H1 (cell line): ENCODE measurements at regions of chr2 and their contacts with region 1.

Region 1: GRCh38 chr2:217650716-217651360 is 352.0 kb downstream of the TNS1 start:
- DNase-seq: peak; percentile 51 to 54
- H3K4me3 ChIP-seq: peak overlapping the region in 1 of 4 experiments; percentile 35; a peak in 2 of 8 replicates
- H3K27ac ChIP-seq: no peak overlapping the region
- H3K4me1 ChIP-seq: peaks cover 0 to 5% (median under 1%) of the 10 kb centered on the region in 4 experiments; a peak in 2 of 7 replicates
- H3K27me3 ChIP-seq: peaks cover 0 to 2% (median 0%) of the 10 kb centered on the region in 4 experiments; a peak in 1 of 7 replicates
- CTCF ChIP-seq: peak; percentile 47 to 94 (median 77)
- EP300 ChIP-seq: no peak
- POLR2A ChIP-seq: no peak
- RAD21 ChIP-seq: peak; percentile 73 to 79

Region 2: DNA sequence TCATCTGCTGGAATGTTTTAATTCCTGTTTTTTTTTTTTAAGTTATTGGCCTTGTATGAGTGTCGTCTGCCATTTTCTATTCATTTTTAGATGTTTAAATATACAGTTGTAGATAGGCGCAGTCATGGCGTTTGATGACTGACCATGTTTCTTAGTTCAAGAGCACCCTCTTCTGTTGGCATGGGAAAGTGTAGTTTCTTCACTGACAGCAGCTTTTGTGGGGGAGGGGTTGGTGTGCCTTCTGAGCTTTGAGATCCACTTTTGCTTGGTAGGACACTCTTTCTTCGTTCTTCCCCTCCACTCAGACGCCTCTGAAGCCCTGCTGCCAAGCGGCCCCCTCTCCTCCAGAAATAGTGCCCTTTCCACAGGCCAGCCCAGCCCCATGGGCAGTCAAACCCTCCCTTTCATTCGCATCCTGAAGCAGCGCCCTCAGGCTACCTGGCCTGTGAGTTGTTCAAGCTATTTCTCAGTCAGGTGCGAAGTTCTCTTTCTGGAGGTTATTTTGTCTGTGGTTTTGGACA is 140.0 kb before region 1 on chr2:
- CTCF ChIA-PET with region 1: interaction called, 17 read pairs
- POLR2A ChIA-PET with region 1: no interaction called
- DNase-seq: peak; percentile 15 to 65
- H3K4me3 ChIP-seq: peak overlapping the region in 1 of 4 experiments; percentile 33; a peak in 3 of 8 replicates
- H3K27ac ChIP-seq: no peak overlapping the region
- H3K4me1 ChIP-seq: peaks cover 0 to 3% (median 2%) of the 10 kb centered on the region in 4 experiments; a peak in 3 of 7 replicates
- H3K27me3 ChIP-seq: no peaks in the 10 kb centered on the region
- CTCF ChIP-seq: peak; percentile 45 to 82 (median 79)
- EP300 ChIP-seq: no peak
- POLR2A ChIP-seq: no peak
- RAD21 ChIP-seq: peak; percentile 97 to 98

Region 3: GRCh38 chr2:217622205-217623060 is 28.4 kb before region 1 on chr2:
- CTCF ChIA-PET with region 1: interaction called, 16 read pairs
- POLR2A ChIA-PET with region 1: no interaction called
- DNase-seq: peak in 1 of 2 experiments; percentile 15
- H3K4me3 ChIP-seq: no peak overlapping the region; a peak in 1 of 8 replicates
- H3K27ac ChIP-seq: no peak overlapping the region
- H3K4me1 ChIP-seq: peaks cover 3 to 14% (median 11%) of the 10 kb centered on the region in 4 experiments; a peak in 5 of 7 replicates
- H3K27me3 ChIP-seq: no peaks in the 10 kb centered on the region
- CTCF ChIP-seq: no peak
- EP300 ChIP-seq: no peak
- POLR2A ChIP-seq: no peak
- RAD21 ChIP-seq: no peak

Region 4: GRCh38 chr2:217636991-217637944 is 13.6 kb before region 1 on chr2:
- CTCF ChIA-PET with region 1: interaction called, 23 read pairs
- POLR2A ChIA-PET with region 1: interaction called, 3 read pairs
- DNase-seq: no peak
- H3K4me3 ChIP-seq: no peak overlapping the region
- H3K27ac ChIP-seq: no peak overlapping the region
- H3K4me1 ChIP-seq: no peaks in the 10 kb centered on the region
- H3K27me3 ChIP-seq: peaks cover 0 to 1% (median 0%) of the 10 kb centered on the region in 4 experiments; a peak in 2 of 7 replicates
- CTCF ChIP-seq: no peak
- EP300 ChIP-seq: no peak
- POLR2A ChIP-seq: no peak
- RAD21 ChIP-seq: no peak

Region 5: DNA sequence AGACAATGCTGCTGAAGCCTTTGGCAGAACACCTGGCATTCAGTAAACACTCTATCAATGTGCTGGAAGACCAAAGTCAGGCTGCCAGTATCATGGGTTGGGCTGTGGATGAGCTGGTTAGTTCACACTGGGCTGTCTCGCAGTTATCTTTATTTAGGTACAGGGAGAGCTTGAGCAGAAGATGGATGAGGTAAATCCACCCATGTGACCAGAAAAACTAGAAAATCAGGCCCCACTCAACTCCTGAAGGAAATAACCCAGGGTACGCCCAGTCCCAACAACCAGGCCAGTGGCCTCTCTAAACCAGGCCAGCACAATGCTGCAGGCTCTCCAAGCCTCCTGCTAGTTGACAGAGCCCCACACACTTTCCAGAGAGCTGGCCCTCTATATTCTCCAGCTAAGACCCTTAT is 21.7 kb after region 1 on chr2:
- CTCF ChIA-PET with region 1: interaction called, 32 read pairs
- POLR2A ChIA-PET with region 1: no interaction called
- DNase-seq: no peak
- H3K4me3 ChIP-seq: no peak overlapping the region
- H3K27ac ChIP-seq: no peak overlapping the region
- H3K4me1 ChIP-seq: no peaks in the 10 kb centered on the region
- H3K27me3 ChIP-seq: no peaks in the 10 kb centered on the region
- CTCF ChIP-seq: no peak
- EP300 ChIP-seq: no peak
- POLR2A ChIP-seq: no peak
- RAD21 ChIP-seq: no peak

Region 6: GRCh38 chr2:217804786-217805667 is 154.2 kb after region 1 on chr2:
- CTCF ChIA-PET with region 1: no interaction called
- POLR2A ChIA-PET with region 1: no interaction called
- DNase-seq: no peak
- H3K4me3 ChIP-seq: no peak overlapping the region
- H3K27ac ChIP-seq: no peak overlapping the region
- H3K4me1 ChIP-seq: peaks cover 0 to 5% (median 0%) of the 10 kb centered on the region in 4 experiments; a peak in 1 of 7 replicates
- H3K27me3 ChIP-seq: no peaks in the 10 kb centered on the region
- CTCF ChIP-seq: no peak
- EP300 ChIP-seq: no peak
- POLR2A ChIP-seq: no peak
- RAD21 ChIP-seq: no peak